ENCODE measurements at regions of chr20 and their contacts with region 1.

Region 1: DNA sequence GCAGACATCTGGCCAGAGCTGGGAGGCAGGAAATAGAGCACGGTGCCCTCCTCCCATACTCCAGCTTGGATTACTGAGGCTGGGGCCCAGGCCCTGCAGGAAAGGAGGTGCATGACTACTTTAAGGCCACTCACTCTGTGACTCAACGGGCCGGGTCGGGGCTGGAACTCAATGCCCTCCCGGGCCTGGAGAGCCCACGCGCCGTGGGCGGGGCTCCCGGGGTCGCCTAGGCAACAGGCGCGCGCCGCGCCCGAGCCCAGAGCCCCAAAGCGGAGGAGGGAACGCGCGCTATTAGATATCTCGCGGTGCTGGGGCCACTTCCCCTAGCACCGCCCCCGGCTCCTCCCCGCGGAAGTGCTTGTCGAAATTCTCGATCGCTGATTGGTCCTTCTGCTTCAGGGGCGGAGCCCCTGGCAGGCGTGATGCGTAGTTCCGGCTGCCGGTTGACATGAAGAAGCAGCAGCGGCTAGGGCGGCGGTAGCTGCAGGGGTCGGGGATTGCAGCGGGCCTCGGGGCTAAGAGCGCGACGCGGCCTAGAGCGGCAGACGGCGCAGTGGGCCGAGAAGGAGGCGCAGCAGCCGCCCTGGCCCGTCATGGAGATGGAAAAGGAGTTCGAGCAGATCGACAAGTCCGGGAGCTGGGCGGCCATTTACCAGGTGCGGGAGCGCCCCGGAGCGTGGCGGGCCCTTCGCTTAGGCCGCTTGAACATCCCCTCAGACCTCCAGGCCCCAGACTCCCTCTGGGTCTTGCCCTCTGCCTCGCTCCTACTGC is at the start of gene PTPN1:
- DNase-seq: peak; percentile 94
- ATAC-seq: peak; percentile 90
- H3K4me3 ChIP-seq: peak within 1 kb of the TSS; percentile 100
- H3K27ac ChIP-seq: peak within 1 kb of the TSS; percentile 98
- H3K4me1 ChIP-seq: peaks cover 13% of the 10 kb centered on the region
- H3K27me3 ChIP-seq: no peaks in the 10 kb centered on the region
- CTCF ChIP-seq: no peak
- EP300 ChIP-seq: no peak
- POLR2A ChIP-seq: peak; percentile 100
- RAD21 ChIP-seq: no peak
- polyA plus RNA-seq, gene PTPN1: 15.9 to 20.2 TPM

Region 2: DNA sequence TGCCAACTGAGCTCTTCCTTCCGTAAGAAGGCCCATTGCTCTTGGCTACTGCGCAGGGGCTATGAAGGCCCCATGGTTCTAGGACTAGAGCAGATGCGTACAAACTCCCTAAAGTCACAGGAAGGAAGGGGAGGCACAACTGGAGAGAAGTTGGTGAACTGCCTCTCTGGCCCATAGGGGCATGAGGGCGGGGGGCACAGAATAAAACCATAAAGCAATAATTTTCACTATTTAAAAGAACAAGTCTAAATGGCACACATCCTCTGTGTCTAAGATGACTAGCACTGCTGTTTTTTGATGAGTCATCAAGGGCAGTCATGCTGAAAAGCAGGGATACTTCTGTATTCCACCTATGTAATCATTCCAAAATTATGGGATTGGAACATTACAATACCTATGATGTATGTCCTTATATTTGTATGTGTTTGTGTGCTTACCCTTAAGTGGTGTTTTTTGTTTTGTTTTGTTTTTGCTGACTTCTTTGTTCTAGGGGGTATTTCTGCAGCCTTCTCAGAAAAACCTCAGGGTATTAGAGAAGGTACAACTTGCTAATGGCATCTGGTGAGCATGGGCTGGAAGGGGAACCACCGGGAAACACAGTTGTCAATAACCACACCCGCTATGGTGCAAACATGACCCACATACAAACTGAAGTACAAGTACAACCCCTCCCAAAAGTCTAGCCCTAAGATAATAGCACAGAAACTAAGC is 833.4 kb before region 1 on chr20:
- CTCF ChIA-PET with region 1: no interaction called
- POLR2A ChIA-PET with region 1: no interaction called
- RAD21 ChIA-PET with region 1: no interaction called
- SMC1A ChIA-PET with region 1: no interaction called
- in situ Hi-C with region 1: loop called (anchors 25 kb)
- intact Hi-C with region 1: no loop called
- DNase-seq: peak; percentile 82
- ATAC-seq: peak; percentile 79
- H3K4me3 ChIP-seq: peak overlapping the region; percentile 41
- H3K27ac ChIP-seq: peak overlapping the region; percentile 87
- H3K4me1 ChIP-seq: peaks cover 78% of the 10 kb centered on the region
- H3K27me3 ChIP-seq: no peaks in the 10 kb centered on the region
- CTCF ChIP-seq: no peak
- EP300 ChIP-seq: peak; percentile 40 to 87; a peak in 3 of 4 replicates
- POLR2A ChIP-seq: no peak
- RAD21 ChIP-seq: 0 out of 2 replicates have a peak, but pooled peaks have one; percentile 6

Region 3: GRCh38 chr20:50395258-50395729 is 114.8 kb before region 1 on chr20:
- CTCF ChIA-PET with region 1: no interaction called
- POLR2A ChIA-PET with region 1: no interaction called
- RAD21 ChIA-PET with region 1: no interaction called
- SMC1A ChIA-PET with region 1: no interaction called
- in situ Hi-C with region 1: no loop called
- intact Hi-C with region 1: no loop called
- DNase-seq: no peak
- ATAC-seq: no peak
- H3K4me3 ChIP-seq: no peak overlapping the region
- H3K27ac ChIP-seq: no peak overlapping the region
- H3K4me1 ChIP-seq: peaks cover 4% of the 10 kb centered on the region; the same call in 1 of the 2 replicates
- H3K27me3 ChIP-seq: no peaks in the 10 kb centered on the region
- CTCF ChIP-seq: no peak
- EP300 ChIP-seq: no peak
- POLR2A ChIP-seq: no peak
- RAD21 ChIP-seq: no peak

Region 4: GRCh38 chr20:50484276-50484976 is 25.7 kb before region 1 on chr20:
- CTCF ChIA-PET with region 1: interaction called, 30 read pairs
- POLR2A ChIA-PET with region 1: interaction called, 29 read pairs
- RAD21 ChIA-PET with region 1: interaction called, 23 read pairs
- SMC1A ChIA-PET with region 1: interaction called, 2,799 read pairs
- in situ Hi-C with region 1: no loop called
- intact Hi-C with region 1: loop called (anchors 2 kb)
- DNase-seq: no peak
- ATAC-seq: no peak
- H3K4me3 ChIP-seq: no peak overlapping the region
- H3K27ac ChIP-seq: peak overlapping the region; percentile 54
- H3K4me1 ChIP-seq: peaks cover 30% of the 10 kb centered on the region
- H3K27me3 ChIP-seq: no peaks in the 10 kb centered on the region
- CTCF ChIP-seq: no peak
- EP300 ChIP-seq: no peak
- POLR2A ChIP-seq: no peak
- RAD21 ChIP-seq: peak; percentile 36; the same call in 1 of the 2 replicates

Region 5: GRCh38 chr20:50528804-50529351 is 18.8 kb after region 1 on chr20:
- CTCF ChIA-PET with region 1: interaction called, 8 read pairs
- POLR2A ChIA-PET with region 1: interaction called, 56 read pairs
- RAD21 ChIA-PET with region 1: interaction called, 40 read pairs
- SMC1A ChIA-PET with region 1: interaction called, 2,799 read pairs
- in situ Hi-C with region 1: no loop called
- intact Hi-C with region 1: no loop called
- DNase-seq: no peak
- ATAC-seq: peak; percentile 85
- H3K4me3 ChIP-seq: peak overlapping the region; percentile 59
- H3K27ac ChIP-seq: peak overlapping the region; percentile 78
- H3K4me1 ChIP-seq: peaks cover 42% of the 10 kb centered on the region
- H3K27me3 ChIP-seq: no peaks in the 10 kb centered on the region
- CTCF ChIP-seq: no peak
- EP300 ChIP-seq: no peak
- POLR2A ChIP-seq: no peak
- RAD21 ChIP-seq: no peak

Region 6: DNA sequence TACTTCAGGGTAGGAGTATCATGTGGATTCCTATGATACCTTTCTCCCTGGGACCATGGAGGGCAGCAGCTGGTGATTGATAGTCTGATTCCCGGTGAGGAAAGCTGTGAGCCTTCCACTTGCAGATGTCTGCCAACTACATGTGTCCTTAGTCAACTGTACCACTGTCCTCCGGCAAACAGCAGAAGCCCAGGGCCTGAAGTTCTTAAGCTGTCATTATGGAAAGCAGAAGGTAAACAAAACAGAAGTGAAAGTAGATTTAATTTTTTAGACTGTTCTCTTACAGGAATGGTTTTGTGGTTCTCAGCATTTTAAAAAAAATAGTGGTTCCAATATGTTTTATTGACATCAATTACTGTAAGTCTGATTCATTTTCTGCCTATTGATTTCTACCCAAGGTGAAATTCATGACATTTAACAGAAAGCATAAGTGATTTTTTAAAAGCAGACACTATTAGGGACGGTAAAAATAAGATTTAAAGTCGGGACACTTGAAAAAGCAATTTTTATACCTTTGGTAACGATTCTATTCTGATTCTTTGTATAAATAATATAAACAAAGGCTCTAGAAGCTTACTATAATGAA is 36.7 kb after region 1 on chr20:
- CTCF ChIA-PET with region 1: interaction called, 14 read pairs
- POLR2A ChIA-PET with region 1: interaction called, 44 read pairs
- RAD21 ChIA-PET with region 1: interaction called, 167 read pairs
- SMC1A ChIA-PET with region 1: interaction called, 2,799 read pairs
- in situ Hi-C with region 1: no loop called
- intact Hi-C with region 1: no loop called
- DNase-seq: no peak
- ATAC-seq: peak; percentile 77
- H3K4me3 ChIP-seq: peak overlapping the region; percentile 58
- H3K27ac ChIP-seq: peak overlapping the region; percentile 17
- H3K4me1 ChIP-seq: peaks cover 66% of the 10 kb centered on the region
- H3K27me3 ChIP-seq: no peaks in the 10 kb centered on the region
- CTCF ChIP-seq: no peak
- EP300 ChIP-seq: peak in 1 of 2 experiments; percentile 23; a peak in 1 of 4 replicates
- POLR2A ChIP-seq: no peak
- RAD21 ChIP-seq: no peak

Region 7: DNA sequence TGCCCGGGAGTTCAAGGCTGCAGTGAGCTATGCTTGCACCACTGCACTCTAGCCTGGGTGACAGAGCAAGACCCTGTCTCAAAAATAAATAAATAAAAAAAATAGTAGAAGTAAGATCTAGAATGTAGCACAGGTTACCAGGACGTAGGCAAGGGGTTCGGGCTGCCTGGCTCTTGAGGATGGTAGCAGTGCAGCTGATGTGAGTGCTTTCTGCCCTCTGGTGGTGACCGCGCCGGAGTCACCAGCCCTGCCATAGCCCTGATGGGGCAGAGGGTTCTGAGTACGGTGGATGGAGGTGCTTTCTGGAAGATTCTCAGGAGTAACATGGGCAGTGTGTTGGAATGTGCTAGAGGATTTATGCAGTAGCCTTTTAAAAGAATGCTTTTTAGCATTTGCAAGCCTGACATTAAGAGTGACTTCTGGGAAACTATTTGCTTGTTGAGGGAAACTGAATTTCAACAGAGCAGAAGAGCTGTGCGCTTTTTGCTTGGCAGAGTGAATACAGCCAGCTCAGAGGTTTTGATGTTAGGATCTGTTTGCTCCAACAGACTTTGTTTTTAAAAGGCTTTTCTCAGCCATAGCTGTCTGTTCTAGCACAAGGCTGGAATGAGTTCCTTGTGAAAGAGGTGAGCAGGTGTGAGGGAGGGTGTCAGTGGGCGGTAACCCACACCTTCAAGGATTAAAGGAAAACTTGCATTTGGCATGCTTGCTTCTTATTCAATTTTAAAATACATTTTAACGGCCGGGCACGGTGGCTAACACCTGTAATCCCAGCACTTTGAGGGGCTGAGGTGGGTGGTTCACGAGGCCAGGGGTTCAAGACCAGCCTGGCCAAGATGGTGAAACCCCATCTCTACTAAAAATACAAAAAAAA is 66.0 kb after region 1 on chr20:
- CTCF ChIA-PET with region 1: interaction called, 240 read pairs
- POLR2A ChIA-PET with region 1: interaction called, 25 read pairs
- RAD21 ChIA-PET with region 1: interaction called, 54 read pairs
- SMC1A ChIA-PET with region 1: interaction called, 2,799 read pairs
- in situ Hi-C with region 1: no loop called
- intact Hi-C with region 1: loop called (anchors 2 kb)
- DNase-seq: no peak
- ATAC-seq: peak; percentile 96
- H3K4me3 ChIP-seq: no peak overlapping the region
- H3K27ac ChIP-seq: no peak overlapping the region
- H3K4me1 ChIP-seq: peaks cover 3% of the 10 kb centered on the region
- H3K27me3 ChIP-seq: no peaks in the 10 kb centered on the region
- CTCF ChIP-seq: peak; percentile 63 to 70 (median 67)
- EP300 ChIP-seq: no peak
- POLR2A ChIP-seq: no peak
- RAD21 ChIP-seq: peak; percentile 60